Gastrocnemius medialis (tissue), 4 donors: ENCODE measurements at regions of chr3 and their contacts with region 1.

Region 1: DNA sequence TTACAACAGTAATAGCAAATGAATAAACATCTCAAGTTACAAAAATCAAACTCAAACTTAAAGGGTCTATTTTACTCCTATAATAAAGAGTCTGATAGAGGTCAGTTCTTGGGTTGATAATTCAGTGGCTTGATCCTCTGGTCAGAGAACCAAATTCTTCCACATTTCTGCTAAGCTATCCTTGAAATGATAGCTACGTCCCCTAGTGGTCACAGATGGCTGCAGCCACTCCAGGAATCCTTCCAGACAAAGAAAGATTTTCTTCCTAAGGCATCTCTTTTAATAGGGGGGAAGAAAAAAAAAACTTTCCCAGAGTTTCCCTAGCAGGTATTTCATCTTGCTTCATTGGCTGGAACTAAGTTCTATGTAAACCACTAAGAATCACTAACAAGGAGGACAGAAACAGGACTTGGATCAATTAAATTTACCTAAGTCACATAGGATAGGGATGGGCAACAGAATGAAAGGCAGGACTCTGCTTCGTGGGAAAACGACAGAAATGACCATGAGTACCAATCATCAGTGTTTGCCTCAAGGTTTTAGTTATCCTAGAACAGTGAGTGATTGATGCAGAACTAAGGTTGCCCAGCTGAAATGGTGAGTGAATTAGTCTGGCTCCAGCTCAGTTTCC is 160.7 kb downstream of the STAC start:
- DNase-seq: no peak
- ATAC-seq: no peak
- H3K4me3 ChIP-seq: no peak overlapping the region
- H3K27ac ChIP-seq: no peak overlapping the region
- H3K4me1 ChIP-seq: no peaks in the 10 kb centered on the region
- H3K27me3 ChIP-seq: no peaks in the 10 kb centered on the region
- CTCF ChIP-seq: peak in 1 of 5 experiments; percentile 34
- POLR2A ChIP-seq: no peak

Region 2: GRCh38 chr3:36494461-36495109 is 46.4 kb before region 1 on chr3:
- in situ Hi-C with region 1: no loop called
- intact Hi-C with region 1: loop called (anchors 5 kb)
- DNase-seq: peak; percentile 8 to 62
- ATAC-seq: peak; percentile 77 to 85
- H3K4me3 ChIP-seq: no peak overlapping the region
- H3K27ac ChIP-seq: peak overlapping the region in 2 of 4 donors; percentile 43 to 46
- H3K4me1 ChIP-seq: no peaks in the 10 kb centered on the region
- H3K27me3 ChIP-seq: no peaks in the 10 kb centered on the region
- CTCF ChIP-seq: no peak
- POLR2A ChIP-seq: peak in 1 of 2 donors; percentile 24

Region 3: GRCh38 chr3:36505393-36505792 is 35.6 kb before region 1 on chr3:
- in situ Hi-C with region 1: no loop called
- intact Hi-C with region 1: no loop called
- DNase-seq: no peak
- ATAC-seq: no peak
- H3K4me3 ChIP-seq: no peak overlapping the region
- H3K27ac ChIP-seq: no peak overlapping the region
- H3K4me1 ChIP-seq: no peaks in the 10 kb centered on the region
- H3K27me3 ChIP-seq: no peaks in the 10 kb centered on the region
- CTCF ChIP-seq: no peak
- POLR2A ChIP-seq: no peak

Region 4: DNA sequence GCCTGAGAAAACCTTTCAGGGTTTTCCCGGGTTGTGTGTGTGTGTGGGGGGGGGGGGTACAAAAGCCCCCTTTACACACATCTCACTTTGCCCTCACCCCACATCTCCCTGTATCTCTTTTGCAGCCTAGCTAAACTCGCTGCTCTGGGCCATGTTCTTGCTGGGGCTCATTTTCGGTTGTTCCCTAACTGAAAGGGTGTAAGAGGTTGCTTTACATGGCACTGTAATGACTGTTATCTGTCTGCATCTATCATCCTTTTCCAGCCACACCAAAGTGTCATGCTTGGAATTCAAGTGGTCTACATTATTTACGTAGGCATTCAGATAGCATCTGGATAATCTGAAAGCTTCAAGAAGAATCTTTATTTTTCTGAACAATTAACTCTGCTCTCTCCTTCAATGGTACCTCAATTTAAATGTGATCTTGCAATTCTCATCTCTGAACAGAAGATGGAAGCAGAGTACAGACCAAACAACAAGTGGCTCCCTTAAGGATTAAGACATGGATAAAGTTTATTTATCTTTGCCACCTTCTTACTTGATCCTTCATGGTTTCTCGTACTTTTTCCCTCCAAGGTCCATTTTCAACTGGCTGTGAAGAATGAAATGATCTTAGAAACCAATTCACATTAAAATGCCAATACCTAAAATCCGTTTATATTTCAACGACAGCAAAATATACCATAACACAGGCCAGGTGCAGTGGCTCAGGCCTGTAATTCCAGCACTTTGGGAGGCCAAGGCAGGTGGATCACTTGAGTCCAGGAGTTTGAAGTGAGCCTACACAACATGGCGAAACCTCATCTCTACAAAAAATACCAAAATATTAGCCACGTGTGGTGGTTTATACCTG is 188.4 kb after region 1 on chr3:
- in situ Hi-C with region 1: no loop called
- intact Hi-C with region 1: no loop called
- DNase-seq: no peak
- ATAC-seq: no peak
- H3K4me3 ChIP-seq: no peak overlapping the region
- H3K27ac ChIP-seq: no peak overlapping the region
- H3K4me1 ChIP-seq: peaks cover 7 to 9% of the 10 kb centered on the region in 2 donors
- H3K27me3 ChIP-seq: no peaks in the 10 kb centered on the region
- CTCF ChIP-seq: peak in 4 of 5 experiments; percentile 49 to 72 (median 57)
- POLR2A ChIP-seq: no peak

Region 5: DNA sequence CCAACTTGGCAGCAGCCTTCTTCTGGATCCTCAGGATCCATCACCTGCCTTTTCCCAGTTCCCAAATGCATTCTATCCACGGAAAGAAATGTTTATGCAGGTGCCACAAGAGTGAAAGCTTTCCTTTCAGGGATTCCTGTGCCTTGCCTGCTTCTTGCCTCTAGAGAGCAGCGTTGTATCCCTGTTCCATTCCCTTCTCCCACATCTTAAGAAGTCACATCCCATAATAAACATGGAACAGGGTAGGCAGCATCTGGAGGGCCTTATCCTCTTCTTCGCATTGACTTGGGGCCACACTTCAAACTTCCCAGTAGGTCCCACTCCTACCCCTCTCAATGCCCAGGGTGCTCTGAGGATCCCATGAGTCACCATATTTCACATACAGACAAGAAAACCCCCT is 296.1 kb after region 1 on chr3:
- in situ Hi-C with region 1: no loop called
- intact Hi-C with region 1: no loop called
- DNase-seq: no peak
- ATAC-seq: no peak
- H3K4me3 ChIP-seq: no peak overlapping the region
- H3K27ac ChIP-seq: no peak overlapping the region
- H3K4me1 ChIP-seq: no peaks in the 10 kb centered on the region
- H3K27me3 ChIP-seq: no peaks in the 10 kb centered on the region
- CTCF ChIP-seq: no peak
- POLR2A ChIP-seq: no peak

Region 6: DNA sequence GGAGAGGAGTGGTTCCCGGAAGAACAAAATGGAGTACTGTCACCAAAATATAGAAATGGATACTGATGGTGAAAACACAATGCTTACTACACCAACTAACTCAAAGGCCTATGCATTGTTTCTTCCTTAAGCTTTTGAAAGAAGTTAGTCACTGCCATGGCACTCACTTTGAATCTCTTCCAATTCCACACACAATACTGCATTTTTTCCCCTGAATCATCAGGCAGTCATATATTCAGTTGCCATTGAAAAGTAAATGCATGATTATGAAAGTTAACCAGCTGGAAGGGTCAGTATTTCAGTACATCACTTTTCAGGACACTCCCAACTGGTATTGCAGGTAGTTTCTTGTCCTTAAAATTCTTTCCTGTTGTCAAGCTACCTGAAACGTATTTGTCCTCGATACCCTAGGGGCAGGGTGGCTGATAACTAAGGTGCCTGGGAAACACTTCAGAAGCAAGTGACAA is 642.4 kb after region 1 on chr3:
- in situ Hi-C with region 1: no loop called
- intact Hi-C with region 1: no loop called
- DNase-seq: no peak
- ATAC-seq: peak in 1 of 2 donors; percentile 20
- H3K4me3 ChIP-seq: no peak overlapping the region
- H3K27ac ChIP-seq: peak overlapping the region; percentile 4 to 70 (median 10)
- H3K4me1 ChIP-seq: peaks cover 30 to 37% of the 10 kb centered on the region in 2 donors
- H3K27me3 ChIP-seq: no peaks in the 10 kb centered on the region
- CTCF ChIP-seq: no peak
- POLR2A ChIP-seq: no peak